Mammary epithelial cell (primary cell): ENCODE measurements at regions of chr14 and their contacts with region 1.

Region 1: DNA sequence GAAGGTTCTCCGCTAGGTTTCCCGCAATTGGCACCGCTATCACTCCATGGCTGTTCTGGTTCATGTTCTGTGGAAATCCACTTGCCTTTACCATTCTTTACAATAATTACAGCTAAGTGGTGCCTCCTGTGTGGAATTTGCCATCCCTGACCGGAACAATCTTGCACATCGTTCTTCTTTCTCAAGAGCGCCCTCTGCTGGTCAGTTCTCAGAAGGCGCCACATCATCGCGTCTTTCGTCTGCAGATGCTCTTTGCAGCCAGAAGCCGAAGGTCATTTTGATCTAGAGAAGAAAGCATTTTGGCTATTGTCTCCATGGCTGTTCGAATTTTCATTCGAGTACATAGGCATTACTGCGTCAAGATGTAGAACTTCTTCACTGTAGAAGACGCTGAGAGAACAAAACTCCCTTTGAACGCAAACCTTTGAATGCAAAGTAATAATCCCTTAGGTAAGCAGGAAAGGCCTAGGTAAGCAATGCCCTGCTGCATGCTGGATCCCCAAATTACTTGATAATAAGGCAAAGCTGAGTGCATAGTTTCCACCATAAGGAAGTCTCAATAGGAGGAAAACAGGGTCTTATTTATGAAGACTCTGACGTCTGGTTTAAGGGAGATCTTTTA is 10.1 kb upstream of the RTRAF start:
- DNase-seq: peak; percentile 54
- H3K4me3 ChIP-seq: no peak overlapping the region
- H3K27ac ChIP-seq: no peak overlapping the region
- H3K4me1 ChIP-seq: no peaks in the 10 kb centered on the region
- H3K27me3 ChIP-seq: no peaks in the 10 kb centered on the region
- CTCF ChIP-seq: peak; percentile 88 to 92

Region 2: GRCh38 chr14:51828017-51828797 is 151.0 kb before region 1 on chr14:
- CTCF ChIA-PET with region 1: no interaction called
- dilution Hi-C with region 1: no loop called
- in situ Hi-C with region 1: no loop called
- intact Hi-C with region 1: loop called (anchors 5 kb)
- DNase-seq: peak; percentile 91
- H3K4me3 ChIP-seq: no peak overlapping the region
- H3K27ac ChIP-seq: peak overlapping the region; percentile 63
- H3K4me1 ChIP-seq: peaks cover 28% of the 10 kb centered on the region
- H3K27me3 ChIP-seq: no peaks in the 10 kb centered on the region
- CTCF ChIP-seq: peak in 1 of 2 donors; percentile 22

Region 3: GRCh38 chr14:52678591-52678990 is 699.4 kb after region 1 on chr14:
- CTCF ChIA-PET with region 1: no interaction called
- dilution Hi-C with region 1: no loop called
- in situ Hi-C with region 1: no loop called
- intact Hi-C with region 1: no loop called
- DNase-seq: no peak
- H3K4me3 ChIP-seq: no peak overlapping the region
- H3K27ac ChIP-seq: no peak overlapping the region
- H3K4me1 ChIP-seq: no peaks in the 10 kb centered on the region
- H3K27me3 ChIP-seq: no peaks in the 10 kb centered on the region
- CTCF ChIP-seq: peak; percentile 43 to 51